Activated CD4-positive, alpha-beta memory T cell treated with anti-CD3 and anti-CD28 coated beads, Interleukin-2, amount 10 ng/mL, durations not matched to agents 7 days and 5 days (primary cell): ENCODE measurements at regions of chr2 and their contacts with region 1.

Region 1: GRCh38 chr2:197179744-197180498 is 130.7 kb downstream of the ANKRD44 start:
- DNase-seq: no peak
- H3K4me3 Mint-ChIP-seq: no peak overlapping the region
- H3K27ac Mint-ChIP-seq: peak overlapping the region; percentile 16
- H3K4me1 Mint-ChIP-seq: peaks cover 26% of the 10 kb centered on the region
- H3K27me3 Mint-ChIP-seq: no peaks in the 10 kb centered on the region

Region 2: GRCh38 chr2:197168705-197169104 is 11.2 kb before region 1 on chr2:
- CTCF ChIA-PET with region 1: interaction called, 19 read pairs
- POLR2A ChIA-PET with region 1: interaction called, 5 read pairs
- DNase-seq: peak; percentile 68
- H3K4me3 Mint-ChIP-seq: no peak overlapping the region
- H3K27ac Mint-ChIP-seq: no peak overlapping the region
- H3K4me1 Mint-ChIP-seq: peaks cover 35% of the 10 kb centered on the region
- H3K27me3 Mint-ChIP-seq: no peaks in the 10 kb centered on the region

Region 3: DNA sequence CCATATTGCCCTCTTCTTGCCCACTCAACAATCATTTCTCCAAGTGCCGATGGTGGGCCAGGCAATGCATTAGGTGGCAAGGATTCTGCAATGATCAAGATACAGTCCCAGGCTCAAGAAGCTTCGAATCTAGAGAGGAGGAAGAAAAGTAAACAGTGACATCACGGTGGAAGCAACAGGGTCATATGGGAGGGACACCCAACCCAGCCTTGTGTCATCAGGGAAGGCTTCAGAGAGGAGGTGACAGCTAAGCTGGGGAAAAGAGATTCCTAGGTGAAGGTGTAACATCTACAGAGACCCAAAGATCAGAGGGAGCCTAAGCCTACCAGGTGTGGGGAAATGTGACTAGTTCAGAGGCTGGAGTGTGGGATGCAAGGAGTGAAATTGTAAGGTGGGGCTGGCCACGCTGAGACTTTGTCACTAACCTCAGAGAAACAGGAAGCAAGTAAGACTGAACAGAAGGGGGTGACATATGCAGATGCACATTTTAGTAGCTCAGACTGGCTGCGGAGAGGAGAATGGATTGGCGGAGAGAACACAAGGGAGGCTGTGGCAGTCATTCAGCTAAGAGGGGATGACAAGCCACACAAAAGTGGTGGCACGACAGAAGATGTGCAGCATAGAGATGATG is 25.8 kb after region 1 on chr2:
- CTCF ChIA-PET with region 1: no interaction called
- POLR2A ChIA-PET with region 1: no interaction called
- DNase-seq: peak; percentile 72
- H3K4me3 Mint-ChIP-seq: peak overlapping the region; percentile 38
- H3K27ac Mint-ChIP-seq: peak overlapping the region; percentile 93
- H3K4me1 Mint-ChIP-seq: peaks cover 85% of the 10 kb centered on the region
- H3K27me3 Mint-ChIP-seq: no peaks in the 10 kb centered on the region